ENCODE measurements at regions of chr6 and their contacts with region 1.

Region 1: GRCh38 chr6:144149891-144150709 is at the start of gene STX11:
- DNase-seq: peak; percentile 69 to 85
- ATAC-seq: peak; percentile 36 to 72 (median 61)
- H3K4me3 ChIP-seq: peak within 1 kb of the TSS; percentile 55
- H3K4me3 Mint-ChIP-seq: peak within 1 kb of the TSS; percentile 91
- H3K27ac ChIP-seq: peak within 1 kb of the TSS; percentile 90
- H3K27ac Mint-ChIP-seq: peak within 1 kb of the TSS; percentile 94 to 96
- H3K4me1 ChIP-seq: peaks cover 16% of the 10 kb centered on the region
- H3K4me1 Mint-ChIP-seq: peaks cover 44 to 47% of the 10 kb centered on the region in 2 donors
- H3K27me3 ChIP-seq: no peaks in the 10 kb centered on the region
- H3K27me3 Mint-ChIP-seq: no peaks in the 10 kb centered on the region
- CTCF ChIP-seq: no peak
- total RNA-seq, gene STX11: 21.9 to 38.3 (median 34.2) TPM

Region 2: DNA sequence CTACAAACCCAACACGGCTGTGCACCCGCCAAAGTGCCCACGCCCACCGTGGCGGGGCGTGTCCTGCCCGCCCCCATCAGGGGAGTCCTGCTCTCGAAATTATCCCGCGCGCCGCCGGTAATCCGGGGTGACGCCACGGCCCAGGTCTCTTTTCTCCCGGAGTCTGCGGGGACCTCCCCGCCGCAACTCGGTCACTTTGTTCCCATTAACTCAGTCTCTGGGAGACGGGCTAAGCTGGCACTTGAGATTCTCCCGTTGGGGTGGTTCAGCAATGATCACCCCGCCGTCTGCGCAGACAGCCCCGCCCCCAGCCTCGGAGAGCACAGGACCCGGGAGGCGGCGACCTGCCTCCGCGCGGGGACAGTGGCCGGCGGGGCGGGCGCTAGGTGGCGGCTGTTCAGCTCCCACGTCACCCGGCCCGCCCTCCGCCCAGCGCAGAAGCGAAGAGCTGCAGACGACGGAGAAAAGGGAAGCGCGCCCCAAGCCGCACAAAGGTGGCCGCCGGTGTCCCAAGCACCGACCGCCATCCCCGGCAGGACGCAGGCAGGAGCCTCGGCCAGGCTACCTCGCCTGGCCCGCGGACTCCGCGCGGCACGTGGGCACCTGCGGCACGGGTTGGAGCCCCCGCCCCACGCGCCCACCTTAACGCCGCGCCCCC is 86.2 kb before region 1 on chr6:
- intact Hi-C with region 1: loop called (anchors 2 kb)
- DNase-seq: peak; percentile 87 to 94
- ATAC-seq: peak; percentile 94 to 98 (median 96)
- H3K4me3 ChIP-seq: peak overlapping the region; percentile 83
- H3K4me3 Mint-ChIP-seq: peak overlapping the region; percentile 95
- H3K27ac ChIP-seq: peak overlapping the region; percentile 83
- H3K27ac Mint-ChIP-seq: peak overlapping the region; percentile 87 to 92
- H3K4me1 ChIP-seq: peaks cover 18% of the 10 kb centered on the region
- H3K4me1 Mint-ChIP-seq: peaks cover 19 to 24% of the 10 kb centered on the region in 2 donors
- H3K27me3 ChIP-seq: no peaks in the 10 kb centered on the region
- H3K27me3 Mint-ChIP-seq: peaks cover 10 to 17% of the 10 kb centered on the region in 2 donors
- CTCF ChIP-seq: no peak

Region 3: GRCh38 chr6:144104898-144105487 is 45.1 kb before region 1 on chr6:
- intact Hi-C with region 1: loop called (anchors 2 kb)
- DNase-seq: peak in 1 of 2 donors; percentile 85
- ATAC-seq: peak; percentile 79 to 88 (median 87)
- H3K4me3 ChIP-seq: no peak overlapping the region
- H3K4me3 Mint-ChIP-seq: no peak overlapping the region
- H3K27ac ChIP-seq: no peak overlapping the region
- H3K27ac Mint-ChIP-seq: peak overlapping the region in 1 of 2 donors; percentile 32
- H3K4me1 ChIP-seq: no peaks in the 10 kb centered on the region
- H3K4me1 Mint-ChIP-seq: peaks cover 5% of the 10 kb centered on the region in 2 donors
- H3K27me3 ChIP-seq: no peaks in the 10 kb centered on the region
- H3K27me3 Mint-ChIP-seq: no peaks in the 10 kb centered on the region
- CTCF ChIP-seq: peak; percentile 94

Region 4: GRCh38 chr6:144215932-144216667 is 66.0 kb after region 1 on chr6:
- intact Hi-C with region 1: loop called (anchors 1 kb)
- DNase-seq: peak; percentile 91 to 96
- ATAC-seq: peak; percentile 84 to 93 (median 86)
- H3K4me3 ChIP-seq: peak overlapping the region; percentile 78
- H3K4me3 Mint-ChIP-seq: peak overlapping the region; percentile 97
- H3K27ac ChIP-seq: peak overlapping the region; percentile 84
- H3K27ac Mint-ChIP-seq: peak overlapping the region; percentile 97 to 100
- H3K4me1 ChIP-seq: peaks cover 24% of the 10 kb centered on the region
- H3K4me1 Mint-ChIP-seq: peaks cover 37 to 40% of the 10 kb centered on the region in 2 donors
- H3K27me3 ChIP-seq: no peaks in the 10 kb centered on the region
- H3K27me3 Mint-ChIP-seq: peaks cover 8 to 10% of the 10 kb centered on the region in 2 donors
- CTCF ChIP-seq: peak; percentile 48

Region 5: DNA sequence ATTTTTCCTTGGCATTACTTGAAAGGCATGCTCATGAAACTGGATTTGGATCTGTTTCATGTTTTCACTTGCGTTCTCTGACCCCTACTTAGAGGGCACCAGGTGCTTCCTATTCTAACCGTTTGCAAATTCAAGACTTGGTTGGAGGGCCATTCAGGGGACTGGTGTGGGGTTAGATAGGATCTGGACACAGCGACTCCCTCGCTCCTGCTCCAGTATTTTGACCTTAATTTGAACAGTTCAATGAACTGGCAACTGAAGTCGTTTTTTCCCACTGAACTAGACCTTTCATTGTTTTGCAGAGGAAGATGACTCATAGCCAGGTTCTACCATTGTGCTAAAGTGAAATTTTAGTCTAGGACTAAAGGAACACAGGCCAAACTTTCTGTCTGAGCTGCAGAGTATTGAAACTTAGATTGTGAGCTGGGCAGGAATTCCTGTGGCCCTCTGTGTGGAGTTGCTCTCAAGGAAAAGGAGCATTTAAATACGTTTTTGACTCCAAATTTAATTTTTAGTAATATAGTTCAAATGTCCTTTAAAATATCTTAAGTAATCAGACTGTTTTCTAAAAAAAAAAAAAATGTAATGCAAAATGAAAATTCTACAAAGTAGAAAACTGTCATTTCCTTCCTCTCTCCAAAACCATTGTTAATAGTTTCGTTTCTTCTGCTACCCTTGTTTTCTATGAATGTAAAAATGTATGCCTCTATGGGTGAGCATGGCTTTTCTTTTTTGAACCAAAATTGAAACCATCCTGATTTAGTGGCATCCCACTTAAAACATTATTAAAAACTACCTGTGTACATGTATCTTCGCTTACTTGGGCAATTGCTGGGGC is 199.8 kb after region 1 on chr6:
- intact Hi-C with region 1: loop called (anchors 5 kb)
- DNase-seq: peak in 1 of 2 donors; percentile 60
- ATAC-seq: peak; percentile 32 to 62 (median 32)
- H3K4me3 ChIP-seq: peak overlapping the region; percentile 17
- H3K4me3 Mint-ChIP-seq: peak overlapping the region; percentile 92
- H3K27ac ChIP-seq: peak overlapping the region; percentile 87
- H3K27ac Mint-ChIP-seq: peak overlapping the region; percentile 90 to 99
- H3K4me1 ChIP-seq: peaks cover 83% of the 10 kb centered on the region
- H3K4me1 Mint-ChIP-seq: peaks cover 81 to 90% of the 10 kb centered on the region in 2 donors
- H3K27me3 ChIP-seq: no peaks in the 10 kb centered on the region
- H3K27me3 Mint-ChIP-seq: no peaks in the 10 kb centered on the region
- CTCF ChIP-seq: no peak

Measured in natural killer cell (primary cell).